Heart right ventricle (tissue), 16 donors: ENCODE measurements at regions of chr14 and their contacts with region 1.

Region 1: GRCh38 chr14:52091928-52092327 is 23.1 kb upstream of the NID2 start:
- DNase-seq: no peak
- ATAC-seq: no peak
- H3K4me3 ChIP-seq: no peak overlapping the region
- H3K27ac ChIP-seq: no peak overlapping the region
- H3K4me1 ChIP-seq: peaks cover 0 to 30% (median 10%) of the 10 kb centered on the region in 9 donors
- H3K27me3 ChIP-seq: no peaks in the 10 kb centered on the region
- CTCF ChIP-seq: no peak

Region 2: DNA sequence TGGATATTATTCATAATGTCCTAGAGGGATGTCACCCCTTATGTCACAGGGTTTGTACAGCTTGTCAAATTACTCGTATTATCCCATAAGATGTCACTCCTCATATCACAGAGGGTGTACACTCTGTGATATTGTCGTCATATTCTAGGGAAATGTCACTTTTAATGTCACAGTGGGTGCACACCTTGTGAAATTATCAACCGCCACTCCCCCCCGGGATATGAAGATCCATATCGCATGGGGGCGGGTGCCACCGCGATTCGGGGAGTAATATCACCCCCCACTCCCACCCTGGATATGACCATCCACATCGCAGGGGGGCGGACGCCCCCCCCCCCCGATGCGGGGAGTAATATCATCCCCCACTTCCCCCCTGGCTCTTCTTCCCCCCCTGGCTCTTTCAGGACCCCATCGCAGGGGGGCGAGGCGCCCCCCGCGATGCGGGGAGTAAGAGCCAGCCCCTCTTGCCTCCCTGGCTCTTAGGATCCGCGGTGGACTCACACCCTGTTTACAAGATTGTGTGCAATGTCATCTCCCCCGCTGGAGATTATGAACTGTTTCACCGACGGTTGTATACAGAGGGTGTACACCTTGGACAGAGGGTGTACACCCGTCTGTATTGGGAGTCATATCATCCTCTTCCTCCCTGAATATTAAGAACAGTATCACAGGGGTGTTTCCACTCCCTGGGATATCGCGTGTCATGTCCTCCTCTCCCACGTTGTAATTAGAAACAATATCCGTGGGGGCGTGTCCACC is 347.4 kb before region 1 on chr14:
- intact Hi-C with region 1: no loop called
- DNase-seq: no peak
- ATAC-seq: no peak
- H3K4me3 ChIP-seq: no peak overlapping the region
- H3K27ac ChIP-seq: no peak overlapping the region
- H3K4me1 ChIP-seq: no peaks in the 10 kb centered on the region
- H3K27me3 ChIP-seq: peaks cover 0 to 3% (median 0%) of the 10 kb centered on the region in 7 donors
- CTCF ChIP-seq: no peak

Region 3: GRCh38 chr14:52103416-52103815 is 11.5 kb after region 1 on chr14:
- intact Hi-C with region 1: loop called in 1 of 10 experiments (anchors 1 kb)
- DNase-seq: no peak
- ATAC-seq: no peak
- H3K4me3 ChIP-seq: no peak overlapping the region
- H3K27ac ChIP-seq: no peak overlapping the region
- H3K4me1 ChIP-seq: peaks cover 0 to 11% (median 3%) of the 10 kb centered on the region in 9 donors
- H3K27me3 ChIP-seq: no peaks in the 10 kb centered on the region
- CTCF ChIP-seq: no peak